AG04450 (cell line): ENCODE measurements at regions of chr4 and their contacts with region 1.

Region 1: GRCh38 chr4:7802093-7802726 is 137.5 kb downstream of the AFAP1 start:
- DNase-seq: no peak
- H3K4me3 ChIP-seq: no peak overlapping the region
- H3K27ac ChIP-seq: no peak overlapping the region
- H3K27me3 ChIP-seq: no peaks in the 10 kb centered on the region
- CTCF ChIP-seq: peak; percentile 89

Region 2: GRCh38 chr4:7827991-7828720 is 25.9 kb after region 1 on chr4:
- CTCF ChIA-PET with region 1: interaction called, 14 read pairs
- POLR2A ChIA-PET with region 1: interaction called, 6 read pairs
- DNase-seq: peak; percentile 97
- H3K4me3 ChIP-seq: peak overlapping the region; percentile 17; the same call in 1 of the 2 replicates
- H3K27ac ChIP-seq: peak overlapping the region; percentile 96
- H3K27me3 ChIP-seq: no peaks in the 10 kb centered on the region
- CTCF ChIP-seq: no peak

Region 3: DNA sequence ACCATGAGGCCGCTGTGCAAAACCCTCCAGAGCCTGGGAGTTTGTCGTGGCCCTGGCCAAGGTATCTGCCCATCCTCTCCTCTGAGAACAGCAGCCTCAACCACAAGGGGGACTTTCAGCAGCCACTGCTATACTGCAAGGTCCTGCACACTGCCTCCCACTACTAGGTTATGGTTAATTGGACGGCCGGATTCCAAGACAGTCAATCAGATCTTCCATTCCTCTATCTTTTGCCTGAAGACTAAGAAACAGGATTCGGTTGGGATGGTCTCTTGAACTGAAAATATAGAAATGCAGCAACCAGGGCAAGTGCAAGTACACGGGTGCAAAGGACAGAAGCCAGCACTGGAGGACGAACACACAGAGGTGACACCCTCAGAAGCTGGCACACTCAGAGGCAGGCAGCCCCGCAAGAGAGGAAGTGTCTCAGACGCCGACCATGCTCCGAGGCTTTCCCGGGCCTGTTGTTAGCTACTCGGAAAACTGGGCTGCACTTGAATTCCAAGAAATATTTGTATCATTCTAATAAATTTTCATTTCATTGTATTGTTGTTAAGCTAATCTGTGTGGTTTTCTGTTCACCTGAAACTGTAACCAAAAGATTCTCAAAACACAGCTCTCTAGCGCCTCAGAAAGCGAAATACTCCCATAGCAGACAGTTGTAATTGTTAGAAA is 74.1 kb after region 1 on chr4:
- CTCF ChIA-PET with region 1: interaction called, 31 read pairs
- POLR2A ChIA-PET with region 1: interaction called, 3 read pairs
- DNase-seq: no peak
- H3K4me3 ChIP-seq: peak overlapping the region; percentile 21
- H3K27ac ChIP-seq: peak overlapping the region; percentile 65
- H3K27me3 ChIP-seq: no peaks in the 10 kb centered on the region
- CTCF ChIP-seq: peak; percentile 61

Region 4: GRCh38 chr4:7939377-7940108 is 137.3 kb after region 1 on chr4 and contains the start of gene AFAP1:
- CTCF ChIA-PET with region 1: interaction called, 68 read pairs
- POLR2A ChIA-PET with region 1: interaction called, 5 read pairs
- DNase-seq: peak; percentile 47
- H3K4me3 ChIP-seq: peak within 1 kb of the TSS; percentile 88
- H3K27ac ChIP-seq: peak within 1 kb of the TSS; percentile 86
- H3K27me3 ChIP-seq: no peaks in the 10 kb centered on the region
- CTCF ChIP-seq: no peak
- polyA plus RNA-seq, gene AFAP1: 57.9 and 61.7 TPM in 2 replicates

Region 5: DNA sequence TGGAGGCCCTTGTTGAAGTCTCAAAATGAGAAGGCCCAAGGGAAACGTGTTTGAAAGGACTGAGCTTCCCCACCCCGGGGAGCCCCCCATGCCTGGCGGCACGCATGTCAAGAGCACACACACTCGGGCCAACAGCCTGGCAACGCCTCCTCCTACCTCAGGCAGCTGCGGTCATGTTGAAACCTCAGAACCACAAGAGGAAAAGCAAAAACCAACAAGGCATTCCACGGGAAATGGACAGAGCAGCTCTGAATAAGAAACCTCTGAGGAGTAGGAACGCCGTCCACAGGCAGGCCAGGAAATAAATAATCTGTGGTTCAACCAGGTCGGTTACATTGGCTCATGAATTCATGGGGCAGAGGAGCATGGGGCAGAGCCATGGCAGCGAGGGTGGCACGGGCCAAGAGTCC is 233.2 kb after region 1 on chr4:
- CTCF ChIA-PET with region 1: no interaction called
- POLR2A ChIA-PET with region 1: no interaction called
- DNase-seq: no peak
- H3K4me3 ChIP-seq: no peak overlapping the region
- H3K27ac ChIP-seq: no peak overlapping the region
- H3K27me3 ChIP-seq: peaks cover 14% of the 10 kb centered on the region
- CTCF ChIP-seq: no peak